ENCODE measurements at regions of chr20 and their contacts with region 1.

Region 1: DNA sequence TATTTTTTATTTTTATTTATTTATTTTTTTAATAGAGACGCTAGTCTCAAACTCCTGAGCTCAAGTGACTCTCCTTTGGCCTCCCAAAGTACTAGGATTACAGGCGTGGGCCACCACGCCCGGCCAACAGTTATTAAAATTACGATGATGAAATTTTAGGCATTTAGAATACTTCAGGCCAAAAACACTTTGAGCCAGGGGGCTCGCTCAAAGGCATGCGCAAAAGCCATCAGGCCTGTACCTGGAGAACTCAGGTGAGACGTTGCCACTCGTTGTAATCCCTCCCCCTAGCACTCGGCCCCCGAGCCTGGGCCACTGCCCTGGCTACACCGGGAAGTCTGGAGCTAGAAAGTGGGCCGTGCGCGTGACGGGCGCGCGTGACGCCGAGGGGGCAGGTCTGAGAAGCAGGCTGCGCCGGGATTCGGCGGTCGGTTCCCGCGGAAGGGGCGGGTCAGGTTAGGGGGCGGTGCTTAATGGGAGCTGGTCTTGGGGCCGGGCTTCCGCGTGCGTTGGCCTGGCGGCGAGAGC is 337 bp upstream of the CBFA2T2 start:
- DNase-seq: peak; percentile 99

Region 2: GRCh38 chr20:33470457-33470856 is 19.1 kb before region 1 on chr20:
- CTCF ChIA-PET with region 1: interaction called, 3 read pairs
- POLR2A ChIA-PET with region 1: interaction called, 24 read pairs
- DNase-seq: no peak

Region 3: GRCh38 chr20:33475381-33476150 is 14.0 kb before region 1 on chr20:
- CTCF ChIA-PET with region 1: interaction called, 3 read pairs
- POLR2A ChIA-PET with region 1: interaction called, 24 read pairs
- DNase-seq: no peak

Region 4: GRCh38 chr20:33501000-33501399 is 11.4 kb after region 1 on chr20:
- CTCF ChIA-PET with region 1: interaction called, 3 read pairs
- POLR2A ChIA-PET with region 1: interaction called, 15 read pairs
- DNase-seq: no peak

Region 5: DNA sequence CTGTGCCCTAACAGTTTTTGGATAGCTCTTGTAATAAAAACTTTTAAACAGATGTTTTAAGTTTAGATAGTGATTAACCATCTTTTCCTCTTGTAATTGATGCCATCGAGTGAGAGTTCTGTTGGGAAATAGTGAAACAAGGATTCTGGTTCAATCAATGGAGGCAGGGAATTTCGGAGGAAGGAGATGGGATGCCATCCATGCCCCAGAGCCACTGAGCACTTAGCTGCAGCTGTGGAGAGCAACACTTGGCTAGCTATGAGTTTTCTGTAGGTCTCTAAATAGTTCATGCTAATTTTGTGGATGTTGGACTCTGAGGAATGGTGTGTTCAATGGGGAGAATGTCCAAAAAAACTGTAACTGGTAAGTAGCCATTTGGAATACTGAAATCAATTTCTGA is 17.0 kb after region 1 on chr20:
- CTCF ChIA-PET with region 1: interaction called, 3 read pairs
- POLR2A ChIA-PET with region 1: interaction called, 15 read pairs
- DNase-seq: no peak

Region 6: GRCh38 chr20:33663161-33664094 is 173.9 kb after region 1 on chr20:
- CTCF ChIA-PET with region 1: no interaction called
- POLR2A ChIA-PET with region 1: interaction called, 17 read pairs
- DNase-seq: peak; percentile 87